Endothelial cell of umbilical vein (primary cell): ENCODE measurements at regions of chr17 and their contacts with region 1.

Region 1: GRCh38 chr17:27892866-27893769 is at the start of gene LYRM9:
- DNase-seq: peak; percentile 91
- H3K4me3 ChIP-seq: peak within 1 kb of the TSS; percentile 8 to 66 (median 61)
- H3K27ac ChIP-seq: peak within 1 kb of the TSS; percentile 30
- H3K4me1 ChIP-seq: peaks cover 11% of the 10 kb centered on the region
- H3K27me3 ChIP-seq: peaks cover 6 to 17% of the 10 kb centered on the region in 2 experiments
- CTCF ChIP-seq: peak; percentile 84 to 97
- POLR2A ChIP-seq: peak; percentile 66
- total RNA-seq, gene LYRM9: 3.1 and 4.0 TPM in 2 replicates

Region 2: GRCh38 chr17:27805520-27806146 is 87.5 kb before region 1 on chr17:
- CTCF ChIA-PET with region 1: interaction called, 40 read pairs
- POLR2A ChIA-PET with region 1: no interaction called
- dilution Hi-C with region 1: no loop called
- intact Hi-C with region 1: no loop called
- DNase-seq: peak; percentile 86
- H3K4me3 ChIP-seq: peak overlapping the region in 1 of 3 experiments; percentile 10
- H3K27ac ChIP-seq: peak overlapping the region; percentile 19
- H3K4me1 ChIP-seq: peaks cover 4% of the 10 kb centered on the region
- H3K27me3 ChIP-seq: peaks cover 0 to 5% of the 10 kb centered on the region in 2 experiments
- CTCF ChIP-seq: peak; percentile 83 to 85
- POLR2A ChIP-seq: no peak

Region 3: DNA sequence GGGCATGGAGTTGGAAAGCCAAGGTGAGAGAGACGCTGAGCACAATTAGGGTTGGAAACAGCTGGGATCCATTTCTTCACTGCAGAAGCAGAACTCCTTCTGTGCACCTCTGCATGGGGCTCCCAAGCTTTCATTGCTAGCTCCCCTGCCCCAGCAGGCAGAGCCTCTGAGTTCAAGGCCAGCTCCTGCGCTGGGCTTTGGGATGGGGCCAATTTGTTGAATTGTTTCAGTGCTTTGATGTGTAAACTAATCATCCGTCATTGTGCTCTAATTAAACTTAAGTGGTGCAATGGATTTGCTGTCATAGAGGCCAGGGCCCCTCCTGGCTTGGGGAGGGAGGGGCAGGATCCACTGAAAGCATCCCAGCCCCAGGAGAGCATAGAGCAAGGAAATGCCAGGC is 13.5 kb after region 1 on chr17:
- CTCF ChIA-PET with region 1: interaction called, 11 read pairs
- POLR2A ChIA-PET with region 1: no interaction called
- dilution Hi-C with region 1: no loop called
- intact Hi-C with region 1: no loop called
- DNase-seq: no peak
- H3K4me3 ChIP-seq: no peak overlapping the region
- H3K27ac ChIP-seq: no peak overlapping the region
- H3K4me1 ChIP-seq: no peaks in the 10 kb centered on the region
- H3K27me3 ChIP-seq: peaks cover 5 to 17% of the 10 kb centered on the region in 2 experiments
- CTCF ChIP-seq: no peak
- POLR2A ChIP-seq: no peak

Region 4: DNA sequence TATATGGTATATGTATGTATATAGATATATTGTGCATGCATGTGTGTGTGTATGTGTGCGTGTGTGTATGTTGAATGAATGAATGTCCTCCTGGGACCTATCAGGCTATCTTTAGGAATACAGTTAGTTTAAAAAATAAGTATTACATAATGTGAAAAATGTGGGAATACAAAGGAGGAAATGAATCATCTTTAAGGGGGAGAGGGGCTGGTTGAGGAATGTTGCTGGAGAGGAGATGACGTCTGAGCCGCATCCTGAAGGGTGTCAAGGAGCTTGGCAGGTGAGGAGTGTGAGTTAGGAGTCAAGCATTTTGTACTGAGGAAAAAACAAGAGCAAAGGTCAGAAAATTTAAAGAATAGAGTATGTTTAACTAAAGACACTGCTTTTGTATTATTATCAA is 86.9 kb after region 1 on chr17:
- CTCF ChIA-PET with region 1: interaction called, 7 read pairs
- POLR2A ChIA-PET with region 1: no interaction called
- dilution Hi-C with region 1: no loop called
- intact Hi-C with region 1: loop called (anchors 2 kb)
- DNase-seq: peak; percentile 99
- H3K4me3 ChIP-seq: no peak overlapping the region
- H3K27ac ChIP-seq: peak overlapping the region; percentile 91
- H3K4me1 ChIP-seq: peaks cover 52% of the 10 kb centered on the region
- H3K27me3 ChIP-seq: no peaks in the 10 kb centered on the region
- CTCF ChIP-seq: no peak
- POLR2A ChIP-seq: peak; percentile 47

Region 5: GRCh38 chr17:28133562-28133970 is 240.4 kb after region 1 on chr17:
- CTCF ChIA-PET with region 1: interaction called, 7 read pairs
- POLR2A ChIA-PET with region 1: no interaction called
- dilution Hi-C with region 1: no loop called
- intact Hi-C with region 1: loop called (anchors 2 kb)
- DNase-seq: peak; percentile 90
- H3K4me3 ChIP-seq: no peak overlapping the region
- H3K27ac ChIP-seq: peak overlapping the region; percentile 74
- H3K4me1 ChIP-seq: peaks cover 38% of the 10 kb centered on the region
- H3K27me3 ChIP-seq: no peaks in the 10 kb centered on the region
- CTCF ChIP-seq: no peak
- POLR2A ChIP-seq: no peak

Region 6: DNA sequence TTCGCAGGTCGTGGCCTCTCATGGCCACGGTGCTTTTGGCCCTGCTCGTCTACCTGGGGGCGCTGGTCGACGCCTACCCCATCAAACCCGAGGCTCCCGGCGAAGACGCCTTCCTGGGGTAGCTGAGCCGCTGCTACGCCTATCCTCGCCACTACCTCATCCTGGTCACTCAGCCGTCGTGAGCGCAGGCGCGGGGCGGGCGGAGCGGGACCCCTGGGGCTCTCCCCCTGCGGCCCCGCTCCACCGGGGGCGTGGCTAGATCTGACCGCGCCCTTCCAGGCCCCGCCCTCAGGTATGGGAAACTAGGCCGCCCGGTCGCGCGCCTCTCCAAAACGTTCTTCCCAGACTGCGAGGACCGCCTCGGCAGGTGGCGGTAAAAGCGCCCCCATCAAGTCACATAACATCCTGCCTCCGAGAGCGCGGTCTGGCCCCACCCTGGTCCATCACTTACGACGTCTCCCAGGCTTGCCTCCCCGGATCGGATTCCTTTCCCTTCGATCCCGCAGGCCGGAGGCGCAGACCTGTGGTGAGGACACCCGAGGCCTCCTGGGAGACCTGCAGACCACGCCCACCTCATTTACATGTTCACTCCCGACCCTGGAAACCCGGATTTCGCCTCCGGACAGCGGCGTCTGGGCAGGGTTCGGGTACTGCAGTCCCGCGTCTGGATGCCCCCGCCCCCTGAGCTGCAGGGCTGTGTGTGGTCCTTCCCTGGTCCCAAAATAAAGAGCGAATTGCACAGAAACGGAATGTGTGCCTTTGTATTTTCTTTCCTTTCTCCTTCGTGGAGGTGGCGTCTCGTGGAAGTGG is 334.4 kb after region 1 on chr17:
- CTCF ChIA-PET with region 1: interaction called, 10 read pairs
- POLR2A ChIA-PET with region 1: no interaction called
- dilution Hi-C with region 1: no loop called
- intact Hi-C with region 1: no loop called
- DNase-seq: no peak
- H3K4me3 ChIP-seq: peak overlapping the region in 2 of 3 experiments; percentile 17
- H3K27ac ChIP-seq: no peak overlapping the region
- H3K4me1 ChIP-seq: peaks cover 3% of the 10 kb centered on the region
- H3K27me3 ChIP-seq: peaks cover 13 to 27% of the 10 kb centered on the region in 2 experiments
- CTCF ChIP-seq: no peak
- POLR2A ChIP-seq: no peak

Region 7: GRCh38 chr17:28346746-28347246 is 453.7 kb after region 1 on chr17:
- CTCF ChIA-PET with region 1: interaction called, 4 read pairs
- POLR2A ChIA-PET with region 1: no interaction called
- dilution Hi-C with region 1: no loop called
- intact Hi-C with region 1: loop called (anchors 1 kb)
- DNase-seq: peak; percentile 90
- H3K4me3 ChIP-seq: no peak overlapping the region
- H3K27ac ChIP-seq: peak overlapping the region; percentile 88
- H3K4me1 ChIP-seq: peaks cover 32% of the 10 kb centered on the region
- H3K27me3 ChIP-seq: no peaks in the 10 kb centered on the region
- CTCF ChIP-seq: peak; percentile 59 to 61
- POLR2A ChIP-seq: no peak